HepG2 (cell line): ENCODE measurements at regions of chr21 and their contacts with region 1.

Region 1: GRCh38 chr21:43591468-43592044 is 67.7 kb downstream of the HSF2BP start:
- DNase-seq: peak; percentile 93
- ATAC-seq: peak; percentile 97
- H3K4me3 ChIP-seq: no peak overlapping the region
- H3K27ac ChIP-seq: peak overlapping the region; percentile 50
- H3K4me1 ChIP-seq: peaks cover 83% of the 10 kb centered on the region
- H3K27me3 ChIP-seq: no peaks in the 10 kb centered on the region; a peak in 1 of 5 replicates
- CTCF ChIP-seq: no peak
- EP300 ChIP-seq: peak; percentile 33 to 86; a peak in 3 of 4 replicates
- POLR2A ChIP-seq: no peak
- RAD21 ChIP-seq: no peak

Region 2: GRCh38 chr21:43611598-43612369 is 20.2 kb after region 1 on chr21:
- CTCF ChIA-PET with region 1: no interaction called
- POLR2A ChIA-PET with region 1: interaction called, 12 read pairs
- in situ Hi-C with region 1: no loop called
- intact Hi-C with region 1: no loop called
- DNase-seq: peak; percentile 75
- ATAC-seq: peak; percentile 91
- H3K4me3 ChIP-seq: no peak overlapping the region
- H3K27ac ChIP-seq: peak overlapping the region; percentile 53
- H3K4me1 ChIP-seq: peaks cover 57% of the 10 kb centered on the region
- H3K27me3 ChIP-seq: no peaks in the 10 kb centered on the region
- CTCF ChIP-seq: peak; percentile 86
- EP300 ChIP-seq: no peak
- POLR2A ChIP-seq: no peak
- RAD21 ChIP-seq: peak; percentile 69